ENCODE measurements at regions of chr7 and their contacts with region 1.

Region 1: DNA sequence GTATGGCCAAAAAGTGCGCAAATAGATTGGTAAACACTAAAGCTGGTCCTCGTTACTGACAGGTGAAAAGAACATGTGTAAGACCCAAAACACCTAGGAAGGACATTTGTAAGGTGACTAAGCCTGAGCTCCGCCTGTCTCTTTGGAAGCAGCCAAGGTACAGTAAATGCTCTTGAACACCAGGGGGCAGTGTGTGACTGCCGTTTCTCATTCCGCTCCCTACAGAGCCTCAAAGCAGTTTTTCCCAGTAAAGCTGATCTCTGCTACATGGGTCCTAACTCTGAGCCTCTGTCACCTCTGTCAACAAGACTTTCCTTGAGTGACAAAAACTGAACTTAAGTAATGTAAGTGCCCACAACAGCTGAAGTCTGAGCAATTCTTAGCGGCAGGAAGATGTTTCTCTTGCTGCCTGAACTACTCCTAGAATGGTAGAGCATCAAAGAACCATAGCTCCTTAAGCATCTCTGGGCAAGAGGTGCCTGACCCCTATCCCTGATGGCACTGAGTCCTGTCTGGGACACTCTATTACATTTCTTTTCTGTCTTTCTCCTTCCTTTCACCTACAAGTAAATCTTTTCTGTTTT is 238.0 kb upstream of the INHBA start:
- DNase-seq: peak; percentile 7 to 73 (median 26)
- ATAC-seq: peak; percentile 71
- H3K4me3 ChIP-seq: no peak overlapping the region
- H3K4me3 Mint-ChIP-seq: no peak overlapping the region
- H3K27ac ChIP-seq: no peak overlapping the region
- H3K27ac Mint-ChIP-seq: no peak overlapping the region
- H3K4me1 ChIP-seq: peaks cover 10% of the 10 kb centered on the region
- H3K4me1 Mint-ChIP-seq: peaks cover 9% of the 10 kb centered on the region
- H3K27me3 ChIP-seq: peaks cover 0 to 8% of the 10 kb centered on the region in 2 experiments
- H3K27me3 Mint-ChIP-seq: peaks cover 48% of the 10 kb centered on the region
- CTCF ChIP-seq: peak; percentile 79

Region 2: GRCh38 chr7:42876182-42877068 is 935.6 kb after region 1 on chr7:
- CTCF ChIA-PET with region 1: no interaction called
- POLR2A ChIA-PET with region 1: no interaction called
- intact Hi-C with region 1: loop called (anchors 10 kb)
- DNase-seq: peak in 12 of 14 experiments; percentile 10 to 63 (median 36)
- ATAC-seq: peak; percentile 55
- H3K4me3 ChIP-seq: no peak overlapping the region
- H3K4me3 Mint-ChIP-seq: no peak overlapping the region
- H3K27ac ChIP-seq: no peak overlapping the region
- H3K27ac Mint-ChIP-seq: no peak overlapping the region
- H3K4me1 ChIP-seq: no peaks in the 10 kb centered on the region
- H3K4me1 Mint-ChIP-seq: no peaks in the 10 kb centered on the region
- H3K27me3 ChIP-seq: peaks cover 0 to 4% of the 10 kb centered on the region in 2 experiments
- H3K27me3 Mint-ChIP-seq: peaks cover 9% of the 10 kb centered on the region
- CTCF ChIP-seq: peak; percentile 74

Region 3: GRCh38 chr7:42886129-42886528 is 945.3 kb after region 1 on chr7:
- CTCF ChIA-PET with region 1: no interaction called
- POLR2A ChIA-PET with region 1: no interaction called
- intact Hi-C with region 1: loop called in 1 of 2 experiments (anchors 10 kb)
- DNase-seq: no peak
- ATAC-seq: no peak
- H3K4me3 ChIP-seq: no peak overlapping the region
- H3K4me3 Mint-ChIP-seq: peak overlapping the region; percentile 35
- H3K27ac ChIP-seq: no peak overlapping the region
- H3K27ac Mint-ChIP-seq: peak overlapping the region; percentile 49
- H3K4me1 ChIP-seq: peaks cover 18% of the 10 kb centered on the region
- H3K4me1 Mint-ChIP-seq: peaks cover 27% of the 10 kb centered on the region
- H3K27me3 ChIP-seq: peaks cover 0 to 5% of the 10 kb centered on the region in 2 experiments
- H3K27me3 Mint-ChIP-seq: no peaks in the 10 kb centered on the region
- CTCF ChIP-seq: no peak

Region 4: GRCh38 chr7:43249823-43250145 is 1308.9 kb after region 1 on chr7:
- CTCF ChIA-PET with region 1: no interaction called
- POLR2A ChIA-PET with region 1: no interaction called
- intact Hi-C with region 1: loop called in 1 of 2 experiments (anchors 10 kb)
- DNase-seq: no peak
- ATAC-seq: no peak
- H3K4me3 ChIP-seq: no peak overlapping the region
- H3K4me3 Mint-ChIP-seq: no peak overlapping the region
- H3K27ac ChIP-seq: no peak overlapping the region
- H3K27ac Mint-ChIP-seq: no peak overlapping the region
- H3K4me1 ChIP-seq: no peaks in the 10 kb centered on the region
- H3K4me1 Mint-ChIP-seq: no peaks in the 10 kb centered on the region
- H3K27me3 ChIP-seq: no peaks in the 10 kb centered on the region
- H3K27me3 Mint-ChIP-seq: peaks cover 34% of the 10 kb centered on the region
- CTCF ChIP-seq: no peak

Region 5: DNA sequence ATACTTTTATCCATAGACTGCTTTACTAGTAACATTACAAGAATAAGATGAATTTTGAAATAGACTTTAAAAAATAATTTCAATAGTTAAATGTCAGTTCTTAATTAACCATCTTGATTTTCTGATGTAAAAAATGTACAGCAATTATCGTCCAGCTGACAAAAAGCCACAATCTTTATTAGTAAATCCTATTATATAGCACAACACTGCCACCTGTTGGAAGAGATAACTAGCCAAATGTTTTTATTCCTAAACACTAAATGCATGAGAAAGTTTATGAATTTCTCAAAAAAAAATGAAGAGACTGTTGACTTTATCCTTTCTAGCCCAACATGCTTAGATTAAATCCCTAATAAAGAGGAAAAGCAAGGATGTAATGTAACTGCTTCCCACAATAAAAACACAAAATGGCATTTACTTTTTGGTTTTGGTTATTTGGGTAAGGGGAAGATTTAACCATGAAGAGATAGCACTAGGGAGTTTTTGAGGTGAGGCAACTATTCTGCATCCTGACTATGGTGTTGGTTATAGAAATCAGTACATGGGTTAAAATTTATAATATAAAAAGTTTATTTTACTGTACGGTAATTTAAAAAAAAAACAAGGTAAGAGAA is 1780.4 kb after region 1 on chr7:
- CTCF ChIA-PET with region 1: no interaction called
- POLR2A ChIA-PET with region 1: no interaction called
- intact Hi-C with region 1: loop called in 1 of 2 experiments (anchors 5 kb)
- DNase-seq: peak in 4 of 14 experiments; percentile 25 to 78 (median 74)
- ATAC-seq: peak; percentile 48
- H3K4me3 ChIP-seq: no peak overlapping the region
- H3K4me3 Mint-ChIP-seq: no peak overlapping the region
- H3K27ac ChIP-seq: no peak overlapping the region
- H3K27ac Mint-ChIP-seq: peak overlapping the region; percentile 0
- H3K4me1 ChIP-seq: peaks cover 8% of the 10 kb centered on the region
- H3K4me1 Mint-ChIP-seq: peaks cover 71% of the 10 kb centered on the region
- H3K27me3 ChIP-seq: no peaks in the 10 kb centered on the region
- H3K27me3 Mint-ChIP-seq: no peaks in the 10 kb centered on the region
- CTCF ChIP-seq: peak; percentile 96

Measured in CD4-positive, alpha-beta T cell (primary cell).